SK-N-SH (cell line): ENCODE measurements at regions of chr19 and their contacts with region 1.

Region 1: DNA sequence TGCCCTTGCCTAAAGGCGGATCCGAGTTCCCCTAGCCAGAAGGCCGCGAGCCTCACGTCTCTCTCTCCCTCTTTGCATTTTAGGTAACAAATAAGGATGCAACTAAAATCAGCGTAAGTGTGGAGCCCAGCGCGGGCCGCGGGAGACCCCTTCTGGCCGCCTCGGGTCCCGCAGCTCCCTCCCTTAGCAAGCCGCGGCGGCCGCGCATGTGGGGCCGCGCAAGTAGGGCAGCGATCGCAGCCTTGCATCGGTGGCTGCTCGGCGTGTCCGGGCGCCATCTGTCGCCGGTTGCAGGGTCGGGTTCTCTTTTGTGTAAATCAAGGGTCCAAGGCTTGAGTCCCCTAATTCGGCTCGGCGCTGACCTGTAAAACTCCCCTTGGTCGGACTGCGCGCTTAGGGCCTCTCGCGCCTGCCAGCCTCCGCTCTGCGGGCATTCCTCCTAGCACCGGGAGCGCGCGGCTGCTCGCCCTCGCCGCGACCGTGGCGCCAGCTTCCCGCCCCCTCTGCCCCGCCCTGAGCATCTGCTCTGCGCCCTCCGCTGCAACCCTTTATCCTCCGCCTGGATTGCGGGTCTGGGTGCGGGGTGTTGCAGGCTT is 2.7 kb downstream of the VSTM2B start:
- DNase-seq: peak; percentile 94
- H3K4me3 ChIP-seq: peak overlapping the region; percentile 26 to 60
- H3K27ac ChIP-seq: no peak overlapping the region
- H3K4me1 ChIP-seq: no peaks in the 10 kb centered on the region; a peak in 1 of 4 replicates
- H3K27me3 ChIP-seq: peaks cover 83% of the 10 kb centered on the region
- CTCF ChIP-seq: peak; percentile 77
- EP300 ChIP-seq: no peak
- RAD21 ChIP-seq: peak; percentile 74

Region 2: GRCh38 chr19:29467824-29468401 is 60.5 kb before region 1 on chr19:
- CTCF ChIA-PET with region 1: interaction called, 23 read pairs
- POLR2A ChIA-PET with region 1: no interaction called
- DNase-seq: peak; percentile 37
- H3K4me3 ChIP-seq: no peak overlapping the region
- H3K27ac ChIP-seq: no peak overlapping the region
- H3K4me1 ChIP-seq: no peaks in the 10 kb centered on the region
- H3K27me3 ChIP-seq: no peaks in the 10 kb centered on the region
- CTCF ChIP-seq: peak; percentile 45
- EP300 ChIP-seq: no peak
- RAD21 ChIP-seq: peak; percentile 47

Region 3: GRCh38 chr19:29489172-29489951 is 39.1 kb before region 1 on chr19:
- CTCF ChIA-PET with region 1: interaction called, 10 read pairs
- POLR2A ChIA-PET with region 1: no interaction called
- DNase-seq: no peak
- H3K4me3 ChIP-seq: no peak overlapping the region
- H3K27ac ChIP-seq: no peak overlapping the region
- H3K4me1 ChIP-seq: no peaks in the 10 kb centered on the region
- H3K27me3 ChIP-seq: peaks cover 5% of the 10 kb centered on the region; the same call in 1 of the 2 replicates
- CTCF ChIP-seq: no peak
- EP300 ChIP-seq: no peak
- RAD21 ChIP-seq: no peak

Region 4: DNA sequence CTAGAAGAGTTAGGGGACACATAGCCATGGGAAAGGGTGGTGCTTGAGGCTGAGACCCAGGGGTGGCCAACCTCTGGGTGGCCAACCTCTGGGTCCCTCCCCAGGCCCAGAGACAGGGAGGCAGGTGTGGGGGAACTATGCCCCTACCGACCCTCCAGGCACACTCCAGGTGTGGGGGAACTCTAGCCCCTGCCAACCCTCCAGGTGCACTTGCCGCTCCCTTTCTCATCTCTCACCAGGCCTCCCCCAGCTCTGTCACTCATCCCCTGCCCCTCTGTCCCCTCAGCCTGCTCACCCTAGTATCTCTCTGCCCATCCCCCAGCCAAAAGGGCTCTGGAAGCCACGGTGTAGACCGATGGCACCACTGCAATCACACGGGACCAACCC is 13.2 kb before region 1 on chr19:
- CTCF ChIA-PET with region 1: interaction called, 16 read pairs
- POLR2A ChIA-PET with region 1: no interaction called
- DNase-seq: no peak
- H3K4me3 ChIP-seq: no peak overlapping the region
- H3K27ac ChIP-seq: no peak overlapping the region
- H3K4me1 ChIP-seq: no peaks in the 10 kb centered on the region
- H3K27me3 ChIP-seq: peaks cover 9% of the 10 kb centered on the region; the same call in 1 of the 2 replicates
- CTCF ChIP-seq: no peak
- EP300 ChIP-seq: no peak
- RAD21 ChIP-seq: no peak

Region 5: DNA sequence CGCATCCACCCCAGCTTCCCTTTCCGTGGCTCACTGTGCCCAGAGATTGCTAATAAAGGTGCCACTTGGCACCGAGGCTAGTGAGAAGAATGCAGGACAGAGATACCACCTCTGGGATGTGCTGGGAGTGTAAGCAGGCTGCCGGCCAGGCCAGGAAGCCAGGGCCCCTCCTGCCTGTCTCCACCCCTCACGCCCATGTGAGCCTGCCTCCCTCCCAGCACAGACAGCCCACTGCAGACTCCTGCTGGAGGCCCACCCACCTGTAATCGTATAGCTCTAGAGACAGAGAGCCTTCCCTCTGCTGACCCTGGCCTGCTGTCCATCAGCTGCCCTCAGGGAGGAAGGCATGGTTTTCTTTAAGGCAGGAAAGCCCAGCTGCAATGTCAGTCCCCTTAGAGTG is 11.2 kb after region 1 on chr19:
- CTCF ChIA-PET with region 1: interaction called, 47 read pairs
- POLR2A ChIA-PET with region 1: no interaction called
- DNase-seq: no peak
- H3K4me3 ChIP-seq: no peak overlapping the region
- H3K27ac ChIP-seq: no peak overlapping the region
- H3K4me1 ChIP-seq: no peaks in the 10 kb centered on the region
- H3K27me3 ChIP-seq: peaks cover 5% of the 10 kb centered on the region; the same call in 1 of the 2 replicates
- CTCF ChIP-seq: no peak
- EP300 ChIP-seq: no peak
- RAD21 ChIP-seq: no peak

Region 6: GRCh38 chr19:29549105-29550070 is 20.9 kb after region 1 on chr19:
- CTCF ChIA-PET with region 1: interaction called, 15 read pairs
- POLR2A ChIA-PET with region 1: no interaction called
- DNase-seq: no peak
- H3K4me3 ChIP-seq: no peak overlapping the region
- H3K27ac ChIP-seq: no peak overlapping the region
- H3K4me1 ChIP-seq: no peaks in the 10 kb centered on the region
- H3K27me3 ChIP-seq: no peaks in the 10 kb centered on the region
- CTCF ChIP-seq: no peak
- EP300 ChIP-seq: no peak
- RAD21 ChIP-seq: no peak